Right cardiac atrium (tissue), 5 donors: ENCODE measurements at regions of chr5 and their contacts with region 1.

Region 1: GRCh38 chr5:67003935-67004729 is 192.5 kb downstream of the CD180 start:
- DNase-seq: peak; percentile 88 to 93 (median 92)
- ATAC-seq: peak; percentile 93 to 94
- H3K4me3 ChIP-seq: peak overlapping the region; percentile 94
- H3K27ac ChIP-seq: peak overlapping the region; percentile 83
- H3K4me1 ChIP-seq: peaks cover 1% of the 10 kb centered on the region
- H3K27me3 ChIP-seq: no peaks in the 10 kb centered on the region

Region 2: GRCh38 chr5:66540078-66540477 is 464.1 kb before region 1 on chr5:
- intact Hi-C with region 1: no loop called
- DNase-seq: no peak
- ATAC-seq: no peak
- H3K4me3 ChIP-seq: no peak overlapping the region
- H3K27ac ChIP-seq: no peak overlapping the region
- H3K4me1 ChIP-seq: no peaks in the 10 kb centered on the region
- H3K27me3 ChIP-seq: no peaks in the 10 kb centered on the region

Region 3: DNA sequence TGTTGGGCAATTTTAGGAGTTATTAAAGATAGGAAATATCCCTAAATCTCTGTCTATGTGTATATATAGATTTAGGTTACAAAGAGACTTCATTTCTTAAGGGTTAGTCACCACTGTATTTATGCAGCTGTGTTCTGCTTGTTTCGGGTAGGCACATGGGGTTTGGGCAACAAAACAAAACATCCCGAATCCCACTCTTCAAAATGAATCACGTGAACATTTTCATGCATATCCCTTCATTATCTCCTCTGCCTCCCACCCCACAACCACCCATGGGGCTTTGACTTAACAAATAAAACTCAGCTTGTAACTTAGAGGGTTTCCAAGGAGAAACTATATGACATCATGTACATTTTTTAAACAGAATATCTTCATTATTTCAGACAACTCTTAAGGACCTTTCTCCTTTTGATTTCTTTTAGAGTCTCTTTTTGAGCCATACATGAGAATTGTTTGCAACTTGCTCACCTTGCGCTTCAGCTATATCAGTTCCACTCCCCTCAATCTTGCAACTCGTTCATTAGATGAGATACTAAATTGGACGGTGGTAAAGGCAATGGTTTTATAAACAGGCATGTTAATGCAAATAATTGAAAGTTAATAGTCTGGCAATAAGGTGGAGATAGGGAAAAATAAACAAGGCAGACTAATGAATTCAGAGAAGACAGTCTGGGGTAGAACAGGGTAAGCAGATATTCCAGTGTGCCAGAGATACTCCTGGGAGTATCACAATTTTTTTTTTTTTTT is 55.8 kb after region 1 on chr5:
- intact Hi-C with region 1: loop called in 1 of 4 experiments (anchors 10 kb)
- DNase-seq: no peak
- ATAC-seq: no peak
- H3K4me3 ChIP-seq: no peak overlapping the region
- H3K27ac ChIP-seq: no peak overlapping the region
- H3K4me1 ChIP-seq: peaks cover 5% of the 10 kb centered on the region
- H3K27me3 ChIP-seq: no peaks in the 10 kb centered on the region

Region 4: GRCh38 chr5:67095346-67096171 is 91.4 kb after region 1 on chr5:
- intact Hi-C with region 1: loop called in 1 of 4 experiments (anchors 10 kb)
- DNase-seq: peak; percentile 85 to 91 (median 87)
- ATAC-seq: peak; percentile 97 to 98
- H3K4me3 ChIP-seq: peak overlapping the region; percentile 12
- H3K27ac ChIP-seq: peak overlapping the region; percentile 57
- H3K4me1 ChIP-seq: peaks cover 7% of the 10 kb centered on the region
- H3K27me3 ChIP-seq: no peaks in the 10 kb centered on the region

Region 5: DNA sequence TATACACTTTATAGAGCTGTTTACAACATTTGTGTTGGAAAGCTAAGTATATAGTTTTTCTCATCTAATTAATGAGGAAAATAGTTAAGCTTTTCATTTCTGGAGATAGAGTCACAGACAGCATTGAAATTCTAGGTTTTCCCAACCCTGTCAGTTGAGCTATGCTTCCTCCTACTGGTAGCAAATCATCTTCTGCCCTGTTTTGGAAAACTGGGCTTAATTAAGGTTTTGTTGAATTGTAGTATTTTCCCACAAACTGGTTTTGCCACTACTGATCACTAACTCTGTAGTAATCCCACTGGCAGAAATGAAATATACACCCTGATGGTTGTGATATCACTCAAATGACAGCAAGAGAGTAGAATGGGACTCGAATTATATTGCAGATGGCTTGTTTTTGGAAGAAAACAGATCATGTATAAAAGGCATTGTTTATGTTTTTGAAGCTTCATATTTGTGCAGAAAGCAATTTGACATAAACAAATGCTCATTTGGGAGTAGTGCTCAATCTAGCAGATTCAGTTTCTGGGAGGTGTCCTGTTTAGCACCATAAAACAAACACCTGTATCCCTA is 145.9 kb after region 1 on chr5:
- intact Hi-C with region 1: loop called in 1 of 4 experiments (anchors 5 kb)
- DNase-seq: no peak
- ATAC-seq: peak; percentile 36 to 53
- H3K4me3 ChIP-seq: no peak overlapping the region
- H3K27ac ChIP-seq: no peak overlapping the region
- H3K4me1 ChIP-seq: no peaks in the 10 kb centered on the region
- H3K27me3 ChIP-seq: no peaks in the 10 kb centered on the region

Region 6: DNA sequence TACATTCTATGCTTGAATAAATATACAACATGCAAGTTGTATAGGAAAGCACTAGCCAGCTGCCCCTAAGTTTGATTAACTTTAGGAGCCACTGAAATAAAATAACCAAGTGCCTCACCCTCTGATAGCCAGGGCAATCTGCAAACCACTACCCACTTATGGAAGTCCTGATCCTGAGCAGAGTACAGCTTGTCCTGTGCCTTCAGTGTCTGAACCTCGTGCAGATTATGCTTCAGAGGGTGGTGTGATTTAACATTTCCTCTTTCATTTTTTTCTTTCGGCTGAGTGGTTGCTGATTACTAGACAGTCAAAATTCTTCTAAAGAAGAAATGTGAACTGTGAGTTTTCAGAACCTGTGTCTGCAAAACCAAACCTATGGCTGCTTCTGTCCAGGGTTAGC is 1539.1 kb after region 1 on chr5:
- intact Hi-C with region 1: no loop called
- DNase-seq: no peak
- ATAC-seq: peak; percentile 59 to 94
- H3K4me3 ChIP-seq: no peak overlapping the region
- H3K27ac ChIP-seq: peak overlapping the region; percentile 35
- H3K4me1 ChIP-seq: no peaks in the 10 kb centered on the region
- H3K27me3 ChIP-seq: no peaks in the 10 kb centered on the region